T-cell (primary cell): ENCODE measurements at regions of chr12 and their contacts with region 1.

Region 1: GRCh38 chr12:121915841-121916321 is 2.5 kb upstream of the CFAP251 start:
- DNase-seq: no peak
- ATAC-seq: no peak
- H3K4me3 ChIP-seq: no peak overlapping the region
- H3K4me3 Mint-ChIP-seq: no peak overlapping the region
- H3K27ac ChIP-seq: no peak overlapping the region
- H3K27ac Mint-ChIP-seq: no peak overlapping the region
- H3K4me1 ChIP-seq: peaks cover 2 to 15% of the 10 kb centered on the region in 2 experiments
- H3K4me1 Mint-ChIP-seq: peaks cover 11 to 18% (median 15%) of the 10 kb centered on the region in 3 donors
- H3K27me3 ChIP-seq: no peaks in the 10 kb centered on the region
- H3K27me3 Mint-ChIP-seq: no peaks in the 10 kb centered on the region

Region 2: DNA sequence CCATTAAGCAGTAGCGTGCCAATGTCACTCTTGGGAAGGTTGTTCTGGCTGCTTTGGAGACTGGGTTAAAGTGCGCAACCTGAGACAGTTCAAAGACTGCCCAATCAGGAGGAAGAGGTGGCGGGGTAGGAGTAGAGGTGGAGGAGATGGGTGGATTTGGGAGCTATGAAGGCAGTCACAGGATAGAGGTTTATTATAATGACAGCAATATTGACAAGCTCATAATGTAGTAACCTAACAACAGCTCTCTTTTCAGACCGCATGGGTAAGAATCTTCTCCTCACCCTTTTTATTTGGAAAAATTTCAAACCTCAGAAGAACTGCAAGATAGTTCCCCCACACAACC is 32.6 kb before region 1 on chr12:
- CTCF ChIA-PET with region 1: interaction called in 1 of 2 experiments, 7 read pairs
- POLR2A ChIA-PET with region 1: interaction called in 1 of 2 experiments, 12 read pairs
- DNase-seq: no peak
- ATAC-seq: no peak
- H3K4me3 ChIP-seq: no peak overlapping the region
- H3K4me3 Mint-ChIP-seq: no peak overlapping the region
- H3K27ac ChIP-seq: no peak overlapping the region
- H3K27ac Mint-ChIP-seq: no peak overlapping the region
- H3K4me1 ChIP-seq: peaks cover 0 to 3% of the 10 kb centered on the region in 2 experiments
- H3K4me1 Mint-ChIP-seq: peaks cover 1 to 7% (median 5%) of the 10 kb centered on the region in 3 donors
- H3K27me3 ChIP-seq: no peaks in the 10 kb centered on the region
- H3K27me3 Mint-ChIP-seq: peaks cover 0 to under 1% of the 10 kb centered on the region in 2 donors

Region 3: DNA sequence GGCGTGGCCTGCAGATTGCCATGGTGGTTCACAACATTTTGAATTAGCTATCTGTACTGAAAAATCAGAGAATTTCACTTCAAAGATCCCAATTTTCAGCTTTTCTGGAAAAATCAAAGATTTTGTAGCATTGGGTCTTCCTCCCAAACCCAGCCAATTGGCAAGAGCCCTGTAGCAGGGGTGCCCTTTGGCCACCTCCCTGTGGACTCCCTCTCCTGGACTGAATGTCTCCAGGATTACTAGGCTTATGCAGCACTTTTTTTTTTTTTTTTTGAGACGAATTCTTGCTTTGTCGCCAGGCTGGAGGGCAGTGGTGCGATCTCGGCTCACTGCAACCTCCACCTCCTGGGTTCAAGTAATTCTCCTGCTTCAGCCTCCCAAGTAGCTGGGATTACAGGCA is 17.6 kb before region 1 on chr12:
- CTCF ChIA-PET with region 1: interaction called in 1 of 2 experiments, 11 read pairs
- POLR2A ChIA-PET with region 1: interaction called in 1 of 2 experiments, 7 read pairs
- DNase-seq: no peak
- ATAC-seq: no peak
- H3K4me3 ChIP-seq: no peak overlapping the region
- H3K4me3 Mint-ChIP-seq: no peak overlapping the region
- H3K27ac ChIP-seq: no peak overlapping the region
- H3K27ac Mint-ChIP-seq: no peak overlapping the region
- H3K4me1 ChIP-seq: peaks cover 0 to 9% of the 10 kb centered on the region in 2 experiments
- H3K4me1 Mint-ChIP-seq: peaks cover 17 to 20% (median 19%) of the 10 kb centered on the region in 3 donors
- H3K27me3 ChIP-seq: no peaks in the 10 kb centered on the region
- H3K27me3 Mint-ChIP-seq: no peaks in the 10 kb centered on the region

Region 4: DNA sequence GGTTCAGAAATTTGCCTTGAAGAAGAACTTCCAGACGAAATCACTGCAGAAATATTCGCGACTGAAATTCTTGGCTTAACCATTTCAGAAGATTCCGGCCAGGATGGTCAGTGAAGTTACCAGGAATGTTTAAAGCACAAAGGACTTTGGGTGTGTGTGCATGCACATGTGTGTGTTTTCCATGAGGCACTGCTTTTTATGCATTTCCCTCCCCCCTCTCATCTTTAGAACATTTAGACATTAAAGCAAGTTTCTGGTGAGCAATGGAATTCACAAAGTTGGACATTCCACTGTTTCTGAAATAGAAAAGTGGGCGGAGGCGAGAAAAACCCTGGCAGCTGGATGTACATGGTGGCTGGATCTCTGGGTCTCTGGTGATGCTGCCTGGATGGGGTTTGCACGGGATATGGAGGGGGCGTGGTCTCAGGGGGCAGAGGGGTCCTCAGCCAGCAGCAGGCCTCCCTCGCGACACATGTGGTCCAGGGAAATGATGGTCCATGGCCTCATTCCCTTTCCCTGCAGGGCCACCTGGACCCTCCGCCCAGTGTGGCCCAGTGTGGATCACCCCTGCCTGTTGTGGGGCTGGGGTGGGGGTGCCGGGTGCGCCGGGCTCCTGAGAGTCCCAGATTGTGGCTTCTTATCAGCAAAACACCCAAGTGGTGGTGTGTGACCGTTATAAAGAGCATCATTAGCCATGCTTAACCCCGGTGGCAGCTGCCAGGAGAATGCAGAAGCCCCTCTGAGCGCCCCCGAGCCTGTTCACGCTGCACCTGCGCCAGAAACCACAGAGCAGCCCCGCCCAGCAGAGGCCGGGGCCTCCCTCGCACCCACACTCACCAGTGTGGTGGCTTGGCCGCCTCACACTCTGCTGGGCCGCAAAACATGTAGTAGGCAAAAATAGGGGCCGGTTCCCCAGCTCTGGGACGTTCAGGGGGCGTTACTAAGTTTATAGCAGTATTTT is 88.0 kb after region 1 on chr12:
- CTCF ChIA-PET with region 1: no interaction called
- POLR2A ChIA-PET with region 1: no interaction called
- DNase-seq: peak in 6 of 35 experiments; percentile 8 to 25 (median 14)
- ATAC-seq: peak in 2 of 4 experiments; percentile 35 to 55
- H3K4me3 ChIP-seq: peak overlapping the region in 1 of 2 donors; percentile 29
- H3K4me3 Mint-ChIP-seq: peak overlapping the region in 1 of 3 donors; percentile 83
- H3K27ac ChIP-seq: no peak overlapping the region
- H3K27ac Mint-ChIP-seq: no peak overlapping the region
- H3K4me1 ChIP-seq: peaks cover 31 to 44% of the 10 kb centered on the region in 2 experiments
- H3K4me1 Mint-ChIP-seq: peaks cover 20 to 39% (median 36%) of the 10 kb centered on the region in 3 donors
- H3K27me3 ChIP-seq: peaks cover 0 to 33% of the 10 kb centered on the region in 2 experiments
- H3K27me3 Mint-ChIP-seq: peaks cover 0 to 15% of the 10 kb centered on the region in 2 donors